ENCODE measurements at regions of chr12 and their contacts with region 1.

Region 1: GRCh38 chr12:77010691-77011548 is 54.4 kb downstream of the E2F7 start:
- DNase-seq: peak; percentile 72
- H3K4me3 ChIP-seq: no peak overlapping the region
- H3K27ac ChIP-seq: no peak overlapping the region
- H3K27me3 ChIP-seq: no peaks in the 10 kb centered on the region
- CTCF ChIP-seq: peak; percentile 100

Region 2: DNA sequence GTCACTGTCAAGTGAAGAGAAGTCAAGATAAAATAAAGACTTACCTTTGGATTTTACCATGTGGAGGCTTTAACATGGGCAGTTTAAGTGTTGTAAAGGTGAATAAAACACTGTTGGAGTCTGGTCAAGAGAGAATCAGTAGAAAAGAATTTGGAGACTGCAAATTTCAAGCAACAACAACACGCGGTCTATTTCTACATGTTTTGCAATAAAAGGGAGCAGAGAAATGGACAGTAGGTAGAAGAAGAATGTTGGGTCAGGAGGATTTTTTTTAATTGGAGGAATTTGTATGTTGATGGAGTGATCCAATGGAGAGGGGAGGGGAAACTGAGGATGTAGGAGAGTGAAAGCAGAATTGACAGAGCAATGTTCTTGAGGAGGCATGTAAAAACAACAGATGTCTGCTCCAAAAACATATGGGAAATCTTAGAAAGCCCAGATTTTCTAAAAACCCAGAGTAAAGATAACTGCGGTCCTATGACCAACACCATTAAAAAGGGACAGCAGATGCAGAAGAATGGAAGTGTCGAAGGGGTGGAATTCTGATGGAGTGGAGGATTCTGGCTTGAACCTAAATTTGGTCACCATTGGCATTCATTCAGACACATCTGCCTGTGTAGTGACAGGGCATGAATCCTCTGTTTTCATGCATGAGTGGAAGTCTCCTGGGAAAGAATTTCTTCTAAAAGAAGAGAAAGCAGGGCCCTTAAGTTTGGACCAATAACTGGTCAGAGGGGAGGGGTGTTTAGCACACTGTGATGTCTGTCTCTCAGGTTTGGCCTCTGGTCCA is 383.4 kb before region 1 on chr12:
- CTCF ChIA-PET with region 1: interaction called, 69 read pairs
- POLR2A ChIA-PET with region 1: no interaction called
- DNase-seq: no peak
- H3K4me3 ChIP-seq: no peak overlapping the region
- H3K27ac ChIP-seq: no peak overlapping the region
- H3K27me3 ChIP-seq: no peaks in the 10 kb centered on the region
- CTCF ChIP-seq: no peak

Region 3: DNA sequence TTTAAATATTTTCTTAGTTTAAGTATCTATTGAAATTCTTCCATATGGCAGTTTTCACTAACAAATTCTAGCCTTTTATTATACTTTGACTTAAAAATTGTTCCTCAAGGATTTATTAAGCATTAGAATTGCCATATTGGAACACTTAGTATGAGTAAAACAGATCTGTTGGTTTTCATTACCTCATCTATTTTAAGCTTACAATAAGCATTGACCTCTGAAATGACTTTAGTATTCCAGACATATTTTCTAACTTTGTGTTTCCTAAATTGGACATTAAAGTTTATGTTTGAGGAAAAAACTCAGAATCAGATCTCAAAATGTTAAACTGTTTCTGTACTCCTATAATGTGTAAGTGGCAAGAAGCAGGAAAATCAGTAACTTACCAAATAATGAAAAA is 180.5 kb before region 1 on chr12:
- CTCF ChIA-PET with region 1: interaction called, 19 read pairs
- POLR2A ChIA-PET with region 1: no interaction called
- DNase-seq: peak; percentile 8
- H3K4me3 ChIP-seq: no peak overlapping the region
- H3K27ac ChIP-seq: no peak overlapping the region
- H3K27me3 ChIP-seq: no peaks in the 10 kb centered on the region
- CTCF ChIP-seq: no peak

Region 4: DNA sequence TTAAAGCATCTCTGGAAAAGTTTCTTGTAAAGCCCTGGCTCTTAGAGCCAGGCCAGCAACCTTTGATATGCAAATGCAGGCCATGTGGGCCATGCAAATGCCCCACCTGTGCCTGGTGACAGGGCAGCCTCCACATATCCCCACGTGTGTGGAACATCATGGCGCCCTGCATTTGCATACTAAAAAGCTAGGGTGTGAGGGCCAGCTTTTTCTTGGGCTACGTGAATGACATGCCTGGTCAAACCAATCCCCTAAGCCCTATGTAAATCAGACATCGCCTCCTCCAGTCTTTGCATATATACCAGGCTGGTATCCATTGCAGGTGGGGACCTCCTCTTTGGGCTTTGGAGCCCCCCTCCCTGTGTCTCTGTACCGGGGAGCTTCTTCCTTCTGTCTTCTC is 138.5 kb before region 1 on chr12:
- CTCF ChIA-PET with region 1: interaction called, 17 read pairs
- POLR2A ChIA-PET with region 1: no interaction called
- DNase-seq: no peak
- H3K4me3 ChIP-seq: no peak overlapping the region
- H3K27ac ChIP-seq: no peak overlapping the region
- H3K27me3 ChIP-seq: no peaks in the 10 kb centered on the region
- CTCF ChIP-seq: no peak

Region 5: DNA sequence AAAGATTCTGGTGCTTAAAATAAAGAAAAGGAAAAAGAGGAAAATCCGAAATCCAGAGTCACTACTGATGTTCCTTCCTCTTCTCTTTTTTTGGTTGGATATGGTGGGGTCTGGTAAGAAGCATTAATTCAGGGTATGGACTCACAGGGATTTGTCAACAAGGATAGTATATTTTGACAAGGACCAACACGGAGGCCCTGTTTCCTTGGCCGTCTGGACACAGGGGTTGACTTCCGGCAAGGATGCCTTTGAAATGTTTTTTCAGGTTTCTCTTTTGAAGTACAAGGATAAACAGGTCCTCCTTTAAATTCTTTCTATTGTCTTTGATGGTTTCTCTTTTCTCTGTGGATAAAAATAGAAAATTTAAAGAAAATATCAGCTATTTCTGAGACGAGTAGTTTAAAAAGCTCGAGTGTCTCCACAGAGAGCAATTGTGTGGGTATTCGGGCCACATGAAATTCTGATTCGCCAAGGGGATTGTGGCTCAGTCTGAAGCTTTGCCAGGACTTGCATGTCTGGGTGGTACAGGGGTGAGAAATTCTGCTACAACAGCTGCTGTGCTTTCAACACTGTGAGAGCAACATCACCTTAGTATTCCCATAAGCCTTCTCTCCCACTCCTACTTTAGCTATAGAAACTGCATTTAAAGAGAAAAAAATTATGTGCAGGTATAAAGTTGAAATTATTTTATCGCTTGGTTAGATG is 43.6 kb before region 1 on chr12:
- CTCF ChIA-PET with region 1: interaction called, 11 read pairs
- POLR2A ChIA-PET with region 1: no interaction called
- DNase-seq: no peak
- H3K4me3 ChIP-seq: no peak overlapping the region
- H3K27ac ChIP-seq: no peak overlapping the region
- H3K27me3 ChIP-seq: no peaks in the 10 kb centered on the region
- CTCF ChIP-seq: no peak

Region 6: GRCh38 chr12:77049767-77050353 is 38.9 kb after region 1 on chr12:
- CTCF ChIA-PET with region 1: interaction called, 11 read pairs
- POLR2A ChIA-PET with region 1: no interaction called
- DNase-seq: peak; percentile 23
- H3K4me3 ChIP-seq: no peak overlapping the region
- H3K27ac ChIP-seq: no peak overlapping the region
- H3K27me3 ChIP-seq: no peaks in the 10 kb centered on the region
- CTCF ChIP-seq: peak; percentile 89